Calu3 (cell line): ENCODE measurements at regions of chr12 and their contacts with region 1.

Region 1: GRCh38 chr12:52139552-52140062 is 52.2 kb downstream of the KRT80 start:
- DNase-seq: peak; percentile 73
- H3K4me3 Mint-ChIP-seq: no peak overlapping the region
- H3K27ac Mint-ChIP-seq: no peak overlapping the region
- H3K4me1 Mint-ChIP-seq: peaks cover 15% of the 10 kb centered on the region
- H3K27me3 Mint-ChIP-seq: peaks cover 14% of the 10 kb centered on the region
- CTCF ChIP-seq: peak; percentile 77

Region 2: DNA sequence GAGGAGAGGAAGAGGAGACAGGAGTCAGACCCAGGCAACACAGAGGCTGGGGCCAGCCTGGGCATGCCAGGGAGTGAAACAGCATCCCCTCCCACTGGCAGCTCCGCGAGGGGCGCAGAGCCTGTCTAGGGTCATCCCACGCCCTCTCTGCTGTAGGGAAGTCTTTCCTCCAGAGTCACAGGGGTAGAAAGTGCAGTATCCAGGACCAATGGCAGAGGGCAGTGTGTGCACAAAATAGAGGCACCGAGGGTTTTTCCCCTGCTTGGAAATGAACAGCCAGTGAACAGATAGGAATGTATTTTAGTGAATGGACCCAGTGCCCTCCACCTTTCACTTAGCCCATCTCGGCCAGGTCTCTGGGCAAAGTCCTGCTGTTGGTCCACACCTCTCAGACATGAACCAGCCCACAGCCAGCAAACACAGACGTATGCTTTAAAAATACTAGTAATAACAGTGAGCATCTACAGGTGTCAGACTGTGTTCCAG is 443.4 kb after region 1 on chr12:
- CTCF ChIA-PET with region 1: no interaction called
- intact Hi-C with region 1: loop called (anchors 10 kb)
- DNase-seq: peak; percentile 58
- H3K4me3 Mint-ChIP-seq: no peak overlapping the region
- H3K27ac Mint-ChIP-seq: no peak overlapping the region
- H3K4me1 Mint-ChIP-seq: peaks cover 10% of the 10 kb centered on the region
- H3K27me3 Mint-ChIP-seq: peaks cover 48% of the 10 kb centered on the region
- CTCF ChIP-seq: peak; percentile 53

Region 3: GRCh38 chr12:52980693-52981423 is 841.3 kb after region 1 on chr12:
- CTCF ChIA-PET with region 1: no interaction called
- intact Hi-C with region 1: loop called (anchors 5 kb)
- DNase-seq: peak; percentile 89
- H3K4me3 Mint-ChIP-seq: no peak overlapping the region
- H3K27ac Mint-ChIP-seq: peak overlapping the region; percentile 47
- H3K4me1 Mint-ChIP-seq: peaks cover 36% of the 10 kb centered on the region
- H3K27me3 Mint-ChIP-seq: no peaks in the 10 kb centered on the region
- CTCF ChIP-seq: peak; percentile 82